ENCODE measurements at regions of chr10 and their contacts with region 1.

Region 1: GRCh38 chr10:13586676-13587355 is at the start of gene PRPF18:
- DNase-seq: peak; percentile 38
- H3K4me3 ChIP-seq: peak within 1 kb of the TSS; percentile 99
- CTCF ChIP-seq: peak; percentile 99

Region 2: GRCh38 chr10:13115832-13116803 is 470.7 kb before region 1 on chr10:
- CTCF ChIA-PET with region 1: no interaction called
- POLR2A ChIA-PET with region 1: no interaction called
- DNase-seq: no peak
- H3K4me3 ChIP-seq: no peak overlapping the region
- CTCF ChIP-seq: no peak

Region 3: DNA sequence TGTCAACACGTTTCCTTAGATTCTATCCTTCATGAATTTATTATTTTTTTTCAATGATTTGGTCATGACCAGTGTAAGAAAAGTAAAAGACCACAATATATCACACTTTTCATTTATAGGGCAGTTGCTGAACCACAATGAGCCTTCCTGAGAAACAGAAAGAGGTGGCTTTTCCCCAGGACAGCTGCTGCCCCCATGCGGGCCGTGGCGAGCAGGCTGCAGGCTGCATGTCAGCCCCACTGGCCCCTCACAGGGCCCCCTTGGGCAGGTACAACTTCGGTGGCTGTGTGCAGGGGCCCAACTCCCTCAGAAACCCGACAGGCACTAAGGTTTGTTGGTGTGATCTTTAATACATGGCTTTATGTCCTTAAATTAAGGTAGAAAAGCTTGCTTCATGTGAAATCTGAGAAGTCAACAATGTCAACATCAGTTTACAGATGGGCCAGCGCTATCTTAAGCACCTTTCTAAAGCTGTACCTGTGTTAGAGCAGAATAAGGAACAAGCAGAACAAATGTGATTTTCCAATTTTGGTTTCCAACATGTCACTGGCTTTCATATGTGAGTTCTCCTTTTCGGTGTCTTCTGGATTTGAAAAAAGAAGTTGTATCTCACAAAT is 68.6 kb before region 1 on chr10:
- CTCF ChIA-PET with region 1: no interaction called
- POLR2A ChIA-PET with region 1: no interaction called
- DNase-seq: no peak
- H3K4me3 ChIP-seq: no peak overlapping the region
- CTCF ChIP-seq: peak; percentile 54

Region 4: GRCh38 chr10:13556676-13557319 is 30.0 kb before region 1 on chr10:
- CTCF ChIA-PET with region 1: no interaction called
- POLR2A ChIA-PET with region 1: no interaction called
- DNase-seq: no peak
- H3K4me3 ChIP-seq: no peak overlapping the region
- CTCF ChIP-seq: no peak

Region 5: GRCh38 chr10:13597909-13598308 is 11.1 kb after region 1 on chr10:
- CTCF ChIA-PET with region 1: interaction called, 49 read pairs
- POLR2A ChIA-PET with region 1: no interaction called
- DNase-seq: no peak
- H3K4me3 ChIP-seq: no peak overlapping the region
- CTCF ChIP-seq: no peak

Region 6: DNA sequence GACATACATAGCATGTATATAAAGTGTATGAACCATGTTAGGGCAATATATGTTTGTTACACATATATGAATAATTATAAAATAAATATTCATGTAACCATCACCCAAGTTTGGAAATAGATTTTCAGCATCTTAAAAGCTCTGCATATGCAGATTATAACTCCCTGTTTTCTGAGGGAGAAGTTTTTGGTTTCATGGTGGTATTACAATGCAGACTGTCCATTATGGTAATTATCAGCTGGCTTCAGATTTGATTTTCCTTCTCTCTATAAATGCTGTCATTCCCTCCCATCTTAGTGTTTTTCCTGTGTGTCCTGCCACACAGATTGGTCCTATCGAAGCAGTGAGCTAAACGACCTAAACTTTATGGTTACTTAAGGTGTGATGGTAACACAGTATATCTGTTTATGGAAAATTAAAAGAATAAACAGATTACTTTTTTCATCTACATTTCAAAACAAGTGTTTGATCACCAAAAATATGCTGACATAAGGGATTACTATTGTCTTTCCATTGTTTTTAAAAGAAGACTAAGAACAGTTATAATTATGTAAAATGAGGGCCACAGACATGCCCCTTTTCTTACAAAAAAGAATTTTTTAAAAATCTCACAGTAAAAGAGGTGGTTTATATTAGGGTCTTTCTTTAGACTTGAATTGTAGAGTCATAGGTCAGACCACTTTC is 17.7 kb after region 1 on chr10:
- CTCF ChIA-PET with region 1: interaction called, 49 read pairs
- POLR2A ChIA-PET with region 1: no interaction called
- DNase-seq: no peak
- H3K4me3 ChIP-seq: no peak overlapping the region
- CTCF ChIP-seq: no peak

Measured in AG04449 (cell line).